MCF 10A (cell line): ENCODE measurements at regions of chr3 and their contacts with region 1.

Region 1: GRCh38 chr3:196942226-196942914 is at the start of gene NCBP2:
- DNase-seq: peak; percentile 97
- H3K4me3 Mint-ChIP-seq: peak within 1 kb of the TSS; percentile 80
- H3K27ac Mint-ChIP-seq: peak within 1 kb of the TSS; percentile 88
- H3K4me1 Mint-ChIP-seq: peaks cover 6% of the 10 kb centered on the region
- H3K27me3 Mint-ChIP-seq: no peaks in the 10 kb centered on the region
- CTCF ChIP-seq: peak; percentile 55
- total RNA-seq, gene NCBP2: 80.9 and 91.8 TPM in 2 replicates

Region 2: DNA sequence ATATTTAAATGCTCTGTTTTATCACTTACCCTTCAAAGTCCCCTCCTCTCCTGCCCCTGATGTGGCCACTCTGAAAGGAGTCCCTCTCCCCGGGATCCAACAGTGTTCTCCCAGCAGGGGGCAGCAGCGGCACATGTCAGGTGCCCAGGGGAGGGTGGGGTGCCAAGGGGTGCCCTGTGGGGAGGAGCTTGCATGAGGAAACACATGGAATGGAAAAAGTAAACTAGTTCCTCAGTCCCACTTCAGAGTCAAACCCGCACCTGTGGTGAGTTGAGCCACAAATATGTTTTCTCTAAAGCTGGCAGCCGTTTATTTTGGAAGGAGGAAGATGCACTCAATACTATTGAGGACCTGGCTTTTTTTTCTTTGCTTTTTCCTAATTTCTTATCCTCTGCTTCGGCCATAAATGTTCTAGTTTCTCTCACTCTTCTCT is 333.0 kb before region 1 on chr3:
- CTCF ChIA-PET with region 1: interaction called, 5 read pairs
- POLR2A ChIA-PET with region 1: interaction called, 3 read pairs
- intact Hi-C with region 1: loop called (anchors 1 kb)
- DNase-seq: peak; percentile 89
- H3K4me3 Mint-ChIP-seq: no peak overlapping the region
- H3K27ac Mint-ChIP-seq: no peak overlapping the region
- H3K4me1 Mint-ChIP-seq: peaks cover 9% of the 10 kb centered on the region
- H3K27me3 Mint-ChIP-seq: no peaks in the 10 kb centered on the region
- CTCF ChIP-seq: peak; percentile 93

Region 3: GRCh38 chr3:196711838-196712513 is 230.4 kb before region 1 on chr3 and contains the starts of genes CEP19 and PIGX:
- CTCF ChIA-PET with region 1: no interaction called
- POLR2A ChIA-PET with region 1: interaction called, 16 read pairs
- intact Hi-C with region 1: loop called (anchors 1 kb)
- DNase-seq: peak; percentile 79
- H3K4me3 Mint-ChIP-seq: peak within 1 kb of the TSS; percentile 93
- H3K27ac Mint-ChIP-seq: peak within 1 kb of the TSS; percentile 91
- H3K4me1 Mint-ChIP-seq: peaks cover 5% of the 10 kb centered on the region
- H3K27me3 Mint-ChIP-seq: no peaks in the 10 kb centered on the region
- CTCF ChIP-seq: no peak
- total RNA-seq, gene CEP19: 1.8 and 3.2 TPM in 2 replicates
- total RNA-seq, gene PIGX: 20.8 and 23.2 TPM in 2 replicates

Region 4: DNA sequence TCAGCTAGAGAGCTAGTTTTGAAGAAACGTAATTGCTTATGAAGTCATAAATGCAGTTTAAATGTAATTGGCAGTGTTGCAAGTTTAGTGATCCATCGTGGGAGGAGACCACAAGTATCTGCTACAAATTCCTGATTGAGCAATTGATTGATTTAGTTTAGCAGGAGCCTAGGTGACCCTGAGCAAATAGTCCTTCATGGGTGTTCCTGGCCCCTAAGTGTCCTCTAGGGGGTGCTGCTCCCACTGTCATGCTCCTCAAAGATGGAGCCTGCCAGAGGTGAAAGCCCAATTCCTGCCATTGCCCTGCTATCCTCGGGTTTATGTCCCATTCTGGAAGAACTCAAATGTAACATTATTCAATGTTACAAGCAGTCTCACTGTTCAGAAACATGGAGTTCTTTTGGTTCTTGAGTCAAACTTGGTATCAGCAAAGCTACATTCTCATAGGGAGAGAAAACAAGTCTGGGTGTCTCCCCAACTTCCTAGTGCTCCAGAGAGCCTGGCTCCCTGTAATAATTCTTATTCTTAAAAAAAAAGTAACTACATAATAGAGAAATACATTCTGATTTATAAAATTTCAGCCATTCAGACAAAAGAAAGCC is 104.5 kb before region 1 on chr3:
- CTCF ChIA-PET with region 1: no interaction called
- POLR2A ChIA-PET with region 1: interaction called, 5 read pairs
- intact Hi-C with region 1: loop called (anchors 2 kb)
- DNase-seq: peak; percentile 77
- H3K4me3 Mint-ChIP-seq: no peak overlapping the region
- H3K27ac Mint-ChIP-seq: no peak overlapping the region
- H3K4me1 Mint-ChIP-seq: no peaks in the 10 kb centered on the region
- H3K27me3 Mint-ChIP-seq: no peaks in the 10 kb centered on the region
- CTCF ChIP-seq: peak; percentile 57

Region 5: DNA sequence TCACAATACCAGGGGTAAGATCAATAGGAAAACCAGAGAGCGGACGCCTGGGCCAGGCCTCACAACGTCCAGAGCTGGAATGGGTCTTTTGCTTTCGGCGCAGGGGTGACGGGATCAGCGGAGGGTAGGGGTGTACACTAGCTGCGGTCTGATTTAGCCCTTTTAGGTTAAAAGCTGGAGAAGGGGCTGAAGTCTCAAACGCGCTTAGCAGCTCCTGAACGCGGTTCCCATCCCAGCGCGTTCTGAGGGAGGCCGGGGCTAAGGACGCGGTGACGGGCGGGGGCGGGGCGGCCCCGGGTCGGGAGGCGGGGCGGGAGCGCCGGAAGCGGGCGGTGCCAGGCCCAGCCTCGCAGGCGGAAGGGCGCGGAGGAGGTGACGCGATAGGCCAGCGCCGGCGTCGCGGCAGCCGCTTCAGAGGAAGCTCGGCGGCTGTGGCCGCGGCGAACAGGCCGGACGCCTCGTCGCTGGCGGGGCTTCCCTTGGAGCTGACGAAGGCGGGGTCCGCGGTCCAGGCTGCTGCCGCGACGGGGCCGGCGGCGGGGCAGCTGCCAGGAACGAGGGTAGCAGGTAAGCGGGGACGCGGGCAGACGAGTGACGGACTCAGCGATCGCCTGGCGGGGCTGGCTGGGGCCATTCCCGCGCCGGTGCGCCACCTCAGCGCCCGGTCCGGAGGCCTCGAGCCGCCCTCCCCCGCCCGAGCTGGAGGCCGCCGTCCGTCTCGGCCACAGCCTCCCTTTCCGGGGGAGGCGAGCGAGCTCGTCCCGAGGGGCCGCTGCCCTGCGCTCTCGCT is 74.7 kb before region 1 on chr3 and contains the start of gene SENP5:
- CTCF ChIA-PET with region 1: interaction called, 4 read pairs
- POLR2A ChIA-PET with region 1: interaction called, 56 read pairs
- intact Hi-C with region 1: no loop called
- DNase-seq: peak; percentile 86
- H3K4me3 Mint-ChIP-seq: peak within 1 kb of the TSS; percentile 90
- H3K27ac Mint-ChIP-seq: peak within 1 kb of the TSS; percentile 93
- H3K4me1 Mint-ChIP-seq: no peaks in the 10 kb centered on the region
- H3K27me3 Mint-ChIP-seq: no peaks in the 10 kb centered on the region
- CTCF ChIP-seq: no peak
- total RNA-seq, gene SENP5: 30.2 and 37.0 TPM in 2 replicates

Region 6: GRCh38 chr3:196969660-196970546 is 27.5 kb after region 1 on chr3:
- CTCF ChIA-PET with region 1: interaction called, 5 read pairs
- POLR2A ChIA-PET with region 1: interaction called, 30 read pairs
- intact Hi-C with region 1: no loop called
- DNase-seq: peak; percentile 54
- H3K4me3 Mint-ChIP-seq: peak overlapping the region; percentile 68
- H3K27ac Mint-ChIP-seq: no peak overlapping the region
- H3K4me1 Mint-ChIP-seq: no peaks in the 10 kb centered on the region
- H3K27me3 Mint-ChIP-seq: no peaks in the 10 kb centered on the region
- CTCF ChIP-seq: peak; percentile 74